ENCODE measurements at regions of chr2 and their contacts with region 1.

Region 1: GRCh38 chr2:217158928-217159327 is 299.1 kb upstream of the TNP1 start:
- DNase-seq: no peak
- ATAC-seq: no peak
- H3K4me3 Mint-ChIP-seq: no peak overlapping the region
- H3K27ac Mint-ChIP-seq: no peak overlapping the region
- H3K4me1 Mint-ChIP-seq: peaks cover 20% of the 10 kb centered on the region
- H3K27me3 Mint-ChIP-seq: peaks cover 3% of the 10 kb centered on the region
- CTCF ChIP-seq: no peak

Region 2: GRCh38 chr2:216698895-216699294 is 460.0 kb before region 1 on chr2:
- CTCF ChIA-PET with region 1: interaction called, 3 read pairs
- POLR2A ChIA-PET with region 1: no interaction called
- intact Hi-C with region 1: loop called (anchors 5 kb)
- DNase-seq: peak; percentile 21
- ATAC-seq: peak; percentile 70
- H3K4me3 Mint-ChIP-seq: no peak overlapping the region
- H3K27ac Mint-ChIP-seq: no peak overlapping the region
- H3K4me1 Mint-ChIP-seq: peaks cover 6% of the 10 kb centered on the region
- H3K27me3 Mint-ChIP-seq: peaks cover 30% of the 10 kb centered on the region
- CTCF ChIP-seq: peak; percentile 45

Region 3: DNA sequence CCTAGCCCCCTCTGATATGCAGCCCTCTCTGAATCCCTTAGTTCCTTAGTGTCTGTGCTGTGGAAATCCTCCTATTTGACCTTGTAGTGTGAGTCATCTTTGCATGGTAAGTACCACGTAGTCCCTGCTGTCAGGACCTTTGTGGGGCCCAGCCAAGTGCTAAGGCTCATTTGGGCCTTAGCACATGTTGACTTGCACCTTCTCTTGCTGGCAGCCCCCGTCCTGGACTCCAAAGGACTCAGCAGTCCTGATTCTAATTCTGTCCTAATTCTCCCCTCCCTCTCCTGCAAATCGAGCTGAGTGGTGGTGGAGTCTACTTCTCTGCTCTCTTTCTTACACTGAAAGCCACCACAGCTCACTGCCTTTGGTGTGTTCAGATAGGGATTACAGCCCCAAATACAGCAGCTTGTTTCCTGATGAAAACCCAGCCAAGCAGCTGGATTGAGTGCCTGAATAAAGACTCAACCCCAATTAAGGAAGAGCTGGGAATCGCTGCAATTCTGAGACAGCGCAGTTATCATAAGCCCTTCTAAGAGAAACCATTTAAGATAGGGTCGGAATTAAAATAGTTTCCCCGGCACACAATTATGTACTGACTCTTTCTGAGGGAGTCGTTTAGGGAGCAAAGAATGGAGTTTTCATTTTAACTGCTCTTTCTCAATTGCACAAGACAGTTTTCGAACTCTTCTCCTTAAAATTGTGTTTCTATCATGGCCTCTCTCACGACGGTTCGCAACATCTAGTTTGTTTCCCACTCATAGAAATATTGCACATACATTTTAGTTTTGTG is 83.5 kb before region 1 on chr2:
- CTCF ChIA-PET with region 1: no interaction called
- POLR2A ChIA-PET with region 1: no interaction called
- intact Hi-C with region 1: no loop called
- DNase-seq: no peak
- ATAC-seq: no peak
- H3K4me3 Mint-ChIP-seq: no peak overlapping the region
- H3K27ac Mint-ChIP-seq: no peak overlapping the region
- H3K4me1 Mint-ChIP-seq: peaks cover 13% of the 10 kb centered on the region
- H3K27me3 Mint-ChIP-seq: peaks cover 2% of the 10 kb centered on the region
- CTCF ChIP-seq: no peak